Mucosa of descending colon (tissue), 3 donors: ENCODE measurements at regions of chr18 and their contacts with region 1.

Region 1: DNA sequence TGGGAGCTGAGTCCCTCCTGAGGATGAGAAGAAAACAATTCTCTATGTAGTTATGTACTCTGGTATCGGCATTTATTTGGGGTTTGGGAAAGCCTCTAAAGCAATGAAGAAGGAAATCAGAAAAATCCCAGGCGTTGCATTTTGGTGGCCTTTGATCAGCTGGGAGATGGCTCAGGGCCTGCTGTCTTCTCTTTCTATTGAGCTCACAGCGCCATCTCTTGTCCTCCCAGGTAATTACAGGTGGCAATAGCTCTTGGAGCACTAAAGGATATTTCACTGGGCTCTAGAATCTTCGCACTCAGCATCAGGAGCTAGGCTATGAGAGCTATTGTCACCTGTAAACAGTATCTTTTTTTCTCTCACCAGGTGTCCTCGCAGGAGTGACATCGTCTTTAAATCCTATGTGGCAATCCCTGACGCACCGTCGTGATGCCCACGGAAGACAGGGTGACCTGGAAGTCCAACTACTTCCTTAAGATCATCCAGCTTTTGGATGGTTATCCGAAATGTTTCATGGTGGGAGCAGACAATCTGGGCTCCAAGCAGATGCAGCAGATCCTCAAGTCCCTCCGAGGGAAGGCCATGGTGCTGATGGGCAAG is 76.1 kb upstream of the PMAIP1 start:
- DNase-seq: peak in 2 of 3 donors; percentile 33 to 81
- ATAC-seq: peak; percentile 77
- H3K4me3 ChIP-seq: no peak overlapping the region
- H3K4me1 ChIP-seq: no peaks in the 10 kb centered on the region
- CTCF ChIP-seq: peak; percentile 58

Region 2: GRCh38 chr18:59459369-59460079 is 364.2 kb before region 1 on chr18:
- intact Hi-C with region 1: loop called in 1 of 2 experiments (anchors 5 kb)
- DNase-seq: no peak
- ATAC-seq: no peak
- H3K4me3 ChIP-seq: no peak overlapping the region
- H3K4me1 ChIP-seq: no peaks in the 10 kb centered on the region
- CTCF ChIP-seq: no peak

Region 3: GRCh38 chr18:59540780-59541179 is 282.9 kb before region 1 on chr18:
- intact Hi-C with region 1: no loop called
- DNase-seq: no peak
- ATAC-seq: no peak
- H3K4me3 ChIP-seq: no peak overlapping the region
- H3K4me1 ChIP-seq: no peaks in the 10 kb centered on the region
- CTCF ChIP-seq: no peak

Region 4: DNA sequence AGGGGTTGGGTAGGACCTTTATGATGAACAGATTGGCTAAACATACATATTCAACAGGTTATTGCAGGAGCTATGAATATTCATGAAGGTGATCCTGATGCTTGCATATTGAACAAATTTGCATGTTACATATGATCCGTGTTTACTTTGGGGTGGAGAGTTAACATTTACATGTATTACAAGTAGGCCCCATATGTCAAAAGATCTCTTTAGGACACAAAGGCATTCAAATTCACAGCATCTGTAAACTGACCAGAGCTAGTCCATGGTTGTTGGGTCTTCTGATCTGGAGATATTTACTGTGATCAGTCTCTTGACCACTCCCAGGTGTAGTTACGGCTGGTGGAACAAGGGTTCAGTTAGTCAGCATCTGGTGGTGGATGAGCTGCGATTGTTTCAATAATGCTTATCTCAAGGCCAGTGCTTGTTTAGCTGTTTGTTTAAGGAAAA is 156.5 kb after region 1 on chr18:
- intact Hi-C with region 1: no loop called
- DNase-seq: no peak
- ATAC-seq: peak; percentile 20
- H3K4me3 ChIP-seq: no peak overlapping the region
- H3K4me1 ChIP-seq: no peaks in the 10 kb centered on the region
- CTCF ChIP-seq: no peak

Region 5: DNA sequence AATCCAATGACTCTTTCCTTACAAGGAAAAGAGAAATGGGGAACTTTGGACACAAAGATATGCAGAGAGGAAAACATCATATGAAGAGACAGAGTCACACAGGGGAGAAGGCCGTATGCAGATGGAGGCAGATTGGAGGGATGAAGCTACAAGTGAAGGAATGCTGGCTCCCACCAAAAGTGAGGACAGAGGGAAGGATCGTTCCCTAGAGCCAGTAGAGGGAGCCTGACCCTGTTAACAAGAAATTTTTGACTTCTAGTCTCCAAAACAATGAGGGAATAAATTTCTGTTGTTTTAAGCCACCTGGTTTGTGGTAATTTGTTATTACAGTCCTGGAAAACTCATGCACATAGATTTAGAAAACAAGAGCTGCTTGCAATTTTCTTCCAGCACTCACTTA is 245.4 kb after region 1 on chr18:
- intact Hi-C with region 1: no loop called
- DNase-seq: no peak
- ATAC-seq: no peak
- H3K4me3 ChIP-seq: no peak overlapping the region
- H3K4me1 ChIP-seq: no peaks in the 10 kb centered on the region
- CTCF ChIP-seq: no peak